ENCODE measurements at regions of chr1 and their contacts with region 1.

Region 1: DNA sequence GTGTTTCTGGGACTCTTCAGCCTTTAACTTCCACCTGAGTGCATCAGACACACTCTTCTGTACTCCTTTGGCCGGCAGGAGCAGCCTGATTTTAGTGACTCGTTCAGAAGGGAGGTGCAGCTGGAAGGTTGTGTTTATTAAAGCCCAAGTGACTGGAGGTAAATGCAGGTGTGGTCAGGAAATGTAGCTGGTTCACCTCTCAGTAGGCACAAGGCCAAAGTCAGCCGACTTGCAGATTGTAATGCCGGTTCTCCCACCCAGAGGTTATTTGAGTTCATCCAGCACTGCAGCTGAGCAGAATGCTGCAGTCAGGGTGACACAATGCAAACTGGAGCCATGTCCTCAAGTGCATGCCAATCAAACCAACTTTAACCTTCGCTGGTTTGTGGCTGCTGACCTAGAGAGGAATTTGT is 91.5 kb downstream of the SPATA46 start:
- DNase-seq: no peak
- H3K4me3 Mint-ChIP-seq: no peak overlapping the region
- H3K27ac Mint-ChIP-seq: no peak overlapping the region
- H3K4me1 Mint-ChIP-seq: no peaks in the 10 kb centered on the region
- H3K27me3 Mint-ChIP-seq: peaks cover 13% of the 10 kb centered on the region

Region 2: DNA sequence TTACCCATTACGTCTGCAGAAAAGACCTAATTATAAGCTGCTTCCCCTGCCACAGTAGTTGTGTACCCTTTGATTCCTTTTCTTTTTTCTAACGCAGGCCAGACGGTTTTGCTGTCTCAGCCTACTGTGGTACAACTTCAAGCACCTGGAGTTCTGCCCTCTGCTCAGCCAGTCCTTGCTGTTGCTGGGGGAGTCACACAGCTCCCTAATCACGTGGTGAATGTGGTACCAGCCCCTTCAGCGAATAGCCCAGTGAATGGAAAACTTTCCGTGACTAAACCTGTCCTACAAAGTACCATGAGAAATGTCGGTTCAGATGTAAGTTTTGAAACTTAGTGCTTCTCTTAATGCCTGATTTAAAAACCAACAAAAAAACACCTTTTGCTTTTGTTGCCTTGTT is 483.2 kb before region 1 on chr1:
- CTCF ChIA-PET with region 1: no interaction called
- intact Hi-C with region 1: loop called (anchors 5 kb)
- DNase-seq: no peak
- H3K4me3 Mint-ChIP-seq: no peak overlapping the region
- H3K27ac Mint-ChIP-seq: no peak overlapping the region
- H3K4me1 Mint-ChIP-seq: peaks cover 23% of the 10 kb centered on the region
- H3K27me3 Mint-ChIP-seq: no peaks in the 10 kb centered on the region